ENCODE measurements at regions of chr19 and their contacts with region 1.

Region 1: DNA sequence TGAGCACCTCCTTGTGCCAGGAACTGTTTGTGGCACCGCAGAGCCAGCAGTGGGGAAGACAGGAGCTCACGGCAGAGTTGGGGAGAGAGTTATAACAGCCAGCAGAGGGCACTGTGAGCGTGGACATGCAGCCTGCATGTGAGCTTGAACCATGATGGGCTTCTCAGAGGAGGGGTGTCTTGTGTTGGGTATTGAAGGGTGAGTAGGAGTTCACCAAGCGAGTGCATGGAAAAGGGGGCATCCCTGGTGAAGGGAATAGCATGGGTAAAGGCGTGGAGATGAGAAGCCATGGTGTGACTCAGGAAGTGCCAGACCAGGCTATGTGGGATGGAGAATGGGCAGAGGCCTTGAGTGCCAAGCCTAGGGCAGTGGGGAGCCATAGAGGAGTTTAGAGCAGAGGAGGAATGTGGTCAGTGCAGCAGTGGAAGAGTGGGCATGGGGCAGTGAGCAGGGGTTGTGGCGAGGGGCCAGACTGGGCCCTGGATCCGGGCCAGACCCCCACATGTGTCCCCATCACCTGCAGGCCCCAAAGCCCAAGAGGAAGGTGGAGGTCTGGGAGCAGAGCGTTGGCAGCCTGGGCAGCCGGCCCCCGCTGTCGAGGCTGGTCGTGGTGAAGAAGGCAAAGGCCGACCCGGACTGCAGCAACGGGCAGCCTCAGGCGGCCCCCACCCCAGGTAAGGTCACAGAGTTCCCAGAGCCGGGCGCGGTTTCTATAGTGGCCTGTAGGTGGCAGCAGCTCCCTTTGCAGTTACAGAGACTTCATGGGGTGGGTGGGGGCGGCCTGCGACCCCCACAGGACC is 11.8 kb upstream of the SHD start:
- DNase-seq: peak; percentile 79
- ATAC-seq: peak; percentile 71
- H3K4me3 Mint-ChIP-seq: no peak overlapping the region
- H3K27ac Mint-ChIP-seq: peak overlapping the region; percentile 4
- H3K4me1 Mint-ChIP-seq: peaks cover 19% of the 10 kb centered on the region
- H3K27me3 Mint-ChIP-seq: no peaks in the 10 kb centered on the region
- CTCF ChIP-seq: peak; percentile 81

Region 2: DNA sequence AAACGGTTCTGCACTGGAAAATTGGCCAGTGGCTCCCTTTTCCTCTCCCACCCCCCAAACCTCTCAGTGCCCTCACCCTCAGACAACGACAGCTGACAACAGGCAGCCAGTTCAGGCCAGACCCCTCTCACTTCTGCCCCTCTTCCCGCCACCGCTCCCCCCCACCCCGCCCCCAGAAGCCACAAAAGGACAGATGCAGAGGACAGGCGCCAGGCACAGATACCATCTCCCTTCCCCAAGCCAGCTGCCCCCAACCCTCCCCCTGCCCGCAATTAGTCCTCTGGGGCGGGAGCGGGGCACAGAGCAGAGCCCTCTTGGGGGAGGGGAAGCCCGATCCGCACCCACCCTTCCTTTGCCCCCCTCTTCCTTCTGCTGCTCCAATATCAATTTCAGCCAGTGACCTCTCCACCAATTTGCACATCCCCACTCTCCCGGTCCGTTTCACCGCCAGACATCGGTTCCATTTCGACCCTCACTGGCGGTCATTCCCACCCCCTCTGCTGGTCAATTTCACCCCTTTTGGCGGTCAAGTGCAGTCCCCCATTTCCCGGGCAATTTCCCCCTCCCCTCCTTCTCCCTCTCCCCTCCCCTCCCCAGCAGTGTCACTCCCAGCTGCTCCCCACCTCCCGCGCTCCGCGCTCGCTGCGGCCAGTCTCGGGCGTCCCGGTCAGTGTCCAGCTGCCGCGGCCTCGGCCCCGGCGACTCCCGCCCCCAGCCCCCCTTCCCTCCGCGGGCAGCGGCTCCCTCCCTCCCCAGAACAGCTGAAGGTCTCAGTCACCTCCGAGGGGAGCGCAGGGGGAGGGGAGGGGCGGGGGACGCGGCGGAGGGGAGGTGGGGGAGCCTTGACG is 11.3 kb after region 1 on chr19 and contains the start of gene SHD:
- CTCF ChIA-PET with region 1: interaction called, 31 read pairs
- POLR2A ChIA-PET with region 1: interaction called, 4 read pairs
- intact Hi-C with region 1: no loop called
- DNase-seq: no peak
- ATAC-seq: no peak
- H3K4me3 Mint-ChIP-seq: no peak within 1 kb of the TSS
- H3K27ac Mint-ChIP-seq: no peak within 1 kb of the TSS
- H3K4me1 Mint-ChIP-seq: peaks cover 7% of the 10 kb centered on the region
- H3K27me3 Mint-ChIP-seq: peaks cover 13% of the 10 kb centered on the region
- CTCF ChIP-seq: no peak
- total RNA-seq, gene SHD: not detected

Region 3: DNA sequence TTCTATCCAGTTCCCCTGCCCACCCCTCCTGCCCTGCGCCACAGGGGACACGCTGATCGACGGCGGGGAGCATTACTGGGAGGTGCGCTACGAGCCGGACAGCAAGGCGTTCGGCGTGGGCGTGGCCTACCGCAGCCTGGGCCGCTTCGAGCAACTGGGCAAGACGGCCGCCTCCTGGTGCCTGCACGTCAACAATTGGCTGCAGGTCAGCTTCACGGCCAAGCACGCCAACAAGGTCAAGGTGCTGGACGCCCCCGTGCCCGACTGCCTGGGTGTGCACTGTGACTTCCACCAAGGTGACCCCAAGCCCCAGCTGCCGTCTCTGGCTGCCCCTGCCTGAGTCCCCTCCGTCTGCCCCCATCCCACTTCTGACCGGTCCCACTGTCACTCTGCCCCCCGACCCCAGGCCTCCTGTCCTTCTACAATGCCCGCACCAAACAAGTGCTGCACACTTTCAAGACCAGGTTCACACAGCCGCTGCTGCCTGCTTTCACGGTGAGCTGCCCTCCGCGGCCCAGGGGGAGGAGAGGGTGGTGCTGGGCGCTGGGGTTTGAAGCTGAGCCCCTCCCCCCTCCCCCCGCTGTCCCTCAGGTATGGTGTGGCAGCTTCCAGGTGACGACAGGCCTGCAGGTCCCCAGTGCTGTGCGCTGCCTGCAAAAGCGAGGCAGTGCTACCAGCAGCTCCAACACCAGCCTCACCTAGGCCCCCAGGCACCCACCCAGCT is 55.8 kb after region 1 on chr19:
- CTCF ChIA-PET with region 1: interaction called, 26 read pairs
- POLR2A ChIA-PET with region 1: no interaction called
- intact Hi-C with region 1: no loop called
- DNase-seq: no peak
- ATAC-seq: no peak
- H3K4me3 Mint-ChIP-seq: no peak overlapping the region
- H3K27ac Mint-ChIP-seq: no peak overlapping the region
- H3K4me1 Mint-ChIP-seq: peaks cover 18% of the 10 kb centered on the region
- H3K27me3 Mint-ChIP-seq: no peaks in the 10 kb centered on the region
- CTCF ChIP-seq: no peak

Region 4: GRCh38 chr19:4352701-4353121 is 85.4 kb after region 1 on chr19:
- CTCF ChIA-PET with region 1: interaction called, 84 read pairs
- POLR2A ChIA-PET with region 1: interaction called, 5 read pairs
- intact Hi-C with region 1: loop called (anchors 5 kb)
- DNase-seq: peak; percentile 75
- ATAC-seq: peak; percentile 90
- H3K4me3 Mint-ChIP-seq: no peak overlapping the region
- H3K27ac Mint-ChIP-seq: no peak overlapping the region
- H3K4me1 Mint-ChIP-seq: peaks cover 2% of the 10 kb centered on the region
- H3K27me3 Mint-ChIP-seq: no peaks in the 10 kb centered on the region
- CTCF ChIP-seq: peak; percentile 98

Region 5: GRCh38 chr19:4524808-4525562 is 257.7 kb after region 1 on chr19:
- CTCF ChIA-PET with region 1: interaction called, 11 read pairs
- POLR2A ChIA-PET with region 1: no interaction called
- intact Hi-C with region 1: no loop called
- DNase-seq: peak; percentile 84
- ATAC-seq: peak; percentile 94
- H3K4me3 Mint-ChIP-seq: no peak overlapping the region
- H3K27ac Mint-ChIP-seq: no peak overlapping the region
- H3K4me1 Mint-ChIP-seq: no peaks in the 10 kb centered on the region
- H3K27me3 Mint-ChIP-seq: no peaks in the 10 kb centered on the region
- CTCF ChIP-seq: peak; percentile 71